CD8-positive, alpha-beta memory T cell (primary cell): ENCODE measurements at regions of chr22 and their contacts with region 1.

Region 1: DNA sequence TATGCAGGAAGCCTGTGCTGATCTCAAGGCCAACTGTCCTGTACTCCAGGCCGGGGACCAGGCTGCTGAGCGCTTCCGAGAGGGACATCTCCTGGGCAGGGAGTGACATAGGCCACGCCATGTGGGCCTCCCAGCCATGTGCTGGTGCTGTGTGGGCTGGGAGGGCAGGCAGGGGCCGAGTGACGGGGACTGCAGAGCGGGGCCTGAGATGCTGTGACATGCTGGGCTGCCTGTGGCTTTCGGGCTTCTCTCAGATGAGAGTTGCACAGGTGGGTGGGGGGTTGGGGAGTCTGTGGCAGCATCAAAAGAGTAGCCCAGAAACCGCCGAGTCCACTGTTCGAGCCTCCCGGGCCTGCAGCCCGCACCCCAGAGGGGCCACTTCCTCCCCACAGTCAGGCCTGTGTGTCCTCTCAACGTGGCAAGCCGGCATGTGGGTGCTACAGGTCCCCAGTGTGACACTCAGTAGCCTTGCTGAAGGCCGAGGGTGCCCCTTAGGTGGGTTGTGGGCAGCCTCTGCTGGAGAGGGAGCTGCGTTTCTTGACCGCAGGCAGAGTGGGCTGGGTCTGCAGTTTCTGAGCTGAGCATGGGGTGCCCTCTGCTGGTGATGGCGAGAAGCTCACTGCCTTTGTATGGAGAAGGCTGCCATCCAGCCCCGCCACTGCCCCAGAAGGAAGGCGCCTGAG is 101.2 kb downstream of the BCR start:
- DNase-seq: peak; percentile 70 to 86 (median 71)
- H3K4me3 ChIP-seq: no peak overlapping the region
- H3K4me3 Mint-ChIP-seq: peak overlapping the region in 1 of 7 donors; percentile 63
- H3K27ac ChIP-seq: peak overlapping the region; percentile 17
- H3K27ac Mint-ChIP-seq: peak overlapping the region; percentile 14 to 84 (median 66)
- H3K4me1 ChIP-seq: peaks cover 16% of the 10 kb centered on the region
- H3K4me1 Mint-ChIP-seq: peaks cover 25 to 43% (median 28%) of the 10 kb centered on the region in 3 donors
- H3K27me3 ChIP-seq: no peaks in the 10 kb centered on the region
- H3K27me3 Mint-ChIP-seq: peaks cover 0 to 1% of the 10 kb centered on the region in 2 donors

Region 2: DNA sequence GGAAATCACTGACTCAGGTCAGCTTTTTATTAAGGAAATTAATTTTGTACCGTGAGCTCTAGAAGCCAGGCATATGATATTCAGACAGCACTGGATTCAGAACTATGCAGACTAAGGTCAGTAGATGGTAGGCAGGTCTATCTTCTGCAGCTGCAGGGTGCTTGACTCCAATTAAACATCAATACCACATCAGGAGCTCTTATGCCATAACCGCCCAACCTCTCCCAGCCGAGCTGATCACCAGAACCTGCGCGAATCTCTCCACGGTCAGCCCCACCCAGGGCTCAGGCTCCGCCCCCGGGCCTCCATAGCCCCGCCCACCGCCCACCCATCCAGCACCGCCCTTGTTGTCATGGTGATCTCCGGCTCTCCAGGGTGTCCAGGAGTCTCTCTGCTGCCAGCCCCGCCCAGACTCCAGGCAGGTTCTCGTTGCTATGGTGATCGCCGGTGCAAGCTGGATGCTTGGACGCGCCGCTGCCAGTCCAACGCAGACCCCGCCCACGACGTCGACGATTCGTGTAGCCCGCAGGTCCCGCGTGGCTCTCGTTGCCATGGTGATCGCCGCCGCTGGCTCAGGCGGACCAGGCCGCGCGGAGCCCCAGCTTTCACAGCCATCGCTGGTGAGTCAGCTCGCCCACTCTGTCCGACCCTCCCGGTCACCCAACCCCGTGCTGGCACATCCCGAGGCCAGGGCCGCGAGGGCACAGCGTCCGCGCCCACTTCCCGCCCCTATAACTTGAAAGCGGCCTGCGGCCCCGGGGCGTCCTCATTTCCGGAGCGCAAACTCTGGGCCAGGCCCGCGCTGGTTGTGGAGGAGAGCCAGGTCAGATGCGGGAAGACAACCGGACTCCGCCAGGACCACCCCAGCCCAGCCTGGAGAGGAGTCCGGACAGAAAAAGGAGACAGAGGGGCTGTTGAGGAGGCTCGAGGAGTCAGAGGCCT is 136.3 kb before region 1 on chr22 and contains the start of gene RAB36:
- CTCF ChIA-PET with region 1: interaction called, 10 read pairs
- POLR2A ChIA-PET with region 1: no interaction called
- DNase-seq: peak; percentile 86 to 97 (median 91)
- H3K4me3 ChIP-seq: peak within 1 kb of the TSS; percentile 40
- H3K4me3 Mint-ChIP-seq: peak within 1 kb of the TSS; percentile 76 to 89 (median 80)
- H3K27ac ChIP-seq: peak within 1 kb of the TSS; percentile 48
- H3K27ac Mint-ChIP-seq: peak within 1 kb of the TSS; percentile 92 to 99 (median 96)
- H3K4me1 ChIP-seq: peaks cover 43% of the 10 kb centered on the region
- H3K4me1 Mint-ChIP-seq: peaks cover 41 to 60% (median 54%) of the 10 kb centered on the region in 3 donors
- H3K27me3 ChIP-seq: peaks cover 7% of the 10 kb centered on the region
- H3K27me3 Mint-ChIP-seq: peaks cover 0 to 3% of the 10 kb centered on the region in 2 donors
- total RNA-seq, gene RAB36: 0.93 to 1.5 TPM

Region 3: GRCh38 chr22:23219822-23220484 is 61.6 kb before region 1 on chr22:
- CTCF ChIA-PET with region 1: no interaction called
- POLR2A ChIA-PET with region 1: no interaction called
- DNase-seq: peak in 1 of 5 donors; percentile 22
- H3K4me3 ChIP-seq: peak overlapping the region; percentile 30
- H3K4me3 Mint-ChIP-seq: peak overlapping the region; percentile 2 to 83 (median 69)
- H3K27ac ChIP-seq: peak overlapping the region; percentile 64
- H3K27ac Mint-ChIP-seq: peak overlapping the region; percentile 48 to 93 (median 88)
- H3K4me1 ChIP-seq: peaks cover 99% of the 10 kb centered on the region
- H3K4me1 Mint-ChIP-seq: peaks cover 93 to 96% (median 96%) of the 10 kb centered on the region in 3 donors
- H3K27me3 ChIP-seq: no peaks in the 10 kb centered on the region
- H3K27me3 Mint-ChIP-seq: no peaks in the 10 kb centered on the region

Region 4: DNA sequence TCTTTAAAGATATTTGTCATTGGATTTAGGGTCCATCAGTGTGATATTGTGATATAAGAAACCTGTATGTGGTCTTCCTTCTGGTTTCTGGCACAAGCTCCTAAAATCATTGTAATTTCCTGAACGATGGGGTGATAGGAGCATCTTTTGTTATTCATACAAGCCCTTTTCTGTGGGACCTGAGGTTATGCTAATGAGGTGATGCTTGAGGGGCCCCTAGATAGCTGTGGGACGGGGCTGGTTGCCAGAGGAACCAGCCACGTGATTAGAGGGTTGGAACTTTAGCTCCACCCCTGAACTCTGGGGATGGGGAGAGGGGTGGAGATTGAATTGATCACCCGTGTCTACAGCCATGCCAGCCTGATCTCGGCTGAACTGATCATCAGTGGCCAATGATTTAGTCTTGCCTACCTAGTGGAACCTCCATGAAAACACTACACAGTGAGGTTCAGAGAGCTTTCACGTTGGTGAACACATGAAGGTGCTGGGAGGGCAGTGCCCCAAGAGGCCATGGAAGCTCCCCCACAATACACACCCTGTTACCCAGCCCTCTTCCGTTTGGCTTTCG is 38.5 kb before region 1 on chr22:
- CTCF ChIA-PET with region 1: interaction called, 10 read pairs
- POLR2A ChIA-PET with region 1: no interaction called
- DNase-seq: peak; percentile 47 to 83 (median 74)
- H3K4me3 ChIP-seq: peak overlapping the region; percentile 8
- H3K4me3 Mint-ChIP-seq: peak overlapping the region; percentile 12 to 82 (median 76)
- H3K27ac ChIP-seq: peak overlapping the region; percentile 52
- H3K27ac Mint-ChIP-seq: peak overlapping the region; percentile 82 to 99 (median 94)
- H3K4me1 ChIP-seq: peaks cover 60% of the 10 kb centered on the region
- H3K4me1 Mint-ChIP-seq: peaks cover 69 to 94% (median 71%) of the 10 kb centered on the region in 3 donors
- H3K27me3 ChIP-seq: no peaks in the 10 kb centered on the region
- H3K27me3 Mint-ChIP-seq: no peaks in the 10 kb centered on the region

Region 5: DNA sequence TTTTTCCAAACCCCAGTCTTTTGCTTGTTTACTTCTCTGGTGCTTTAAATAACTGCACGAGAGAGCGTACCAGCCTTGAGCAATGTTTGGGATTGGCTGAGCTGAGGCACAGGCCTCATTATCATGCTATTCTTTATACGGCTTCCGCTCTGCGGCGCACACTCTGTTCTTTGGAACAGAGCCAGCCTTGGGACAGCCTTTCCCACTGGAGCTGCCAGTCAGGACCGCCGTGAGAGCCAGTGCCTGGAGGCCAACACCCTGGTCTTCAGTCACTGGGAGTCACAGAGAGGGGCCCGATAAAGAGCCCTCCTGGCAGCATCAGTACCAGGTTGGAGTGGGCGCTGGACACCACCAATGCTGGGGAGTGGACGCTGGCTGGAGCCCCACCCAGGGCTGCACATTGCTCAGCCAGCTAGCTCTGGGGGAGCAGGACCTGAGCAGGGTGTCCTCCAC is 24.4 kb after region 1 on chr22:
- CTCF ChIA-PET with region 1: no interaction called
- POLR2A ChIA-PET with region 1: no interaction called
- DNase-seq: no peak
- H3K4me3 ChIP-seq: no peak overlapping the region
- H3K4me3 Mint-ChIP-seq: no peak overlapping the region
- H3K27ac ChIP-seq: no peak overlapping the region
- H3K27ac Mint-ChIP-seq: peak overlapping the region in 2 of 8 donors; percentile 65 to 76
- H3K4me1 ChIP-seq: no peaks in the 10 kb centered on the region
- H3K4me1 Mint-ChIP-seq: peaks cover 0 to 4% (median 0%) of the 10 kb centered on the region in 3 donors
- H3K27me3 ChIP-seq: no peaks in the 10 kb centered on the region
- H3K27me3 Mint-ChIP-seq: no peaks in the 10 kb centered on the region